IMR-90 (cell line): ENCODE measurements at regions of chr9 and their contacts with region 1.

Region 1: GRCh38 chr9:122264360-122265148 is at the starts of genes MRRF and RBM18:
- DNase-seq: peak; percentile 91
- ATAC-seq: peak; percentile 92
- H3K4me3 ChIP-seq: peak within 1 kb of the TSS; percentile 72
- H3K27ac ChIP-seq: peak within 1 kb of the TSS; percentile 99
- H3K4me1 ChIP-seq: no peaks in the 10 kb centered on the region; the same call in 1 of the 2 replicates
- H3K27me3 ChIP-seq: no peaks in the 10 kb centered on the region
- CTCF ChIP-seq: 0 out of 2 replicates have a peak, but pooled peaks have one; percentile 15
- POLR2A ChIP-seq: peak; percentile 80
- RAD21 ChIP-seq: peak; percentile 8; the same call in 1 of the 2 replicates
- total RNA-seq, gene MRRF: 35.8 and 38.0 TPM in 2 replicates
- total RNA-seq, gene RBM18: 8.1 and 8.4 TPM in 2 replicates

Region 2: GRCh38 chr9:122318284-122318683 is 53.7 kb after region 1 on chr9:
- CTCF ChIA-PET with region 1: interaction called, 3 read pairs
- POLR2A ChIA-PET with region 1: no interaction called
- dilution Hi-C with region 1: no loop called
- in situ Hi-C with region 1: no loop called
- intact Hi-C with region 1: loop called (anchors 5 kb)
- DNase-seq: no peak
- ATAC-seq: no peak
- H3K4me3 ChIP-seq: no peak overlapping the region
- H3K27ac ChIP-seq: no peak overlapping the region
- H3K4me1 ChIP-seq: no peaks in the 10 kb centered on the region
- H3K27me3 ChIP-seq: no peaks in the 10 kb centered on the region
- CTCF ChIP-seq: no peak
- POLR2A ChIP-seq: no peak
- RAD21 ChIP-seq: no peak

Region 3: DNA sequence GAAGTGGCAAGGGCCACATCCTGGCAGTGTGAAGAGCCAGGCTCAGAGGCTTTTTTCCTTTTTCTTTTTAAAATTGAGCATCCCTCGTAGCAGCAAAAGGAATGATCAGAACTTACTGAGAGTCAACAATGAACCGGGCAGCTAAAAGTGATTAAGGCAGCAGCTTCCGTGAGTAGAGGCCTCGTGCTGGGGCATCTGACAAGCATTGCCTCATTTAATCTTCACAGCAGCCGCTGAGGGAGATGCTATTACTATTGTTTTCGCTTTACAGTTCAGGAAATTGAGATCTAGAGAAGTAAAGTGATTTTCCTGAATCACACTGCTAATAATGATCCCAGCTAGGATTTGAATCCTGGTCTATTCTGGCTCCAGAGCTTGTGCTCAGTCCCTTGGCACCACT is 75.6 kb after region 1 on chr9:
- CTCF ChIA-PET with region 1: no interaction called
- POLR2A ChIA-PET with region 1: no interaction called
- dilution Hi-C with region 1: no loop called
- in situ Hi-C with region 1: loop called (anchors 5 kb)
- intact Hi-C with region 1: no loop called
- DNase-seq: no peak
- ATAC-seq: no peak
- H3K4me3 ChIP-seq: no peak overlapping the region
- H3K27ac ChIP-seq: no peak overlapping the region
- H3K4me1 ChIP-seq: no peaks in the 10 kb centered on the region
- H3K27me3 ChIP-seq: peaks cover 22% of the 10 kb centered on the region
- CTCF ChIP-seq: no peak
- POLR2A ChIP-seq: no peak
- RAD21 ChIP-seq: no peak